Mammary epithelial cell (primary cell): ENCODE measurements at regions of chr22 and their contacts with region 1.

Region 1: DNA sequence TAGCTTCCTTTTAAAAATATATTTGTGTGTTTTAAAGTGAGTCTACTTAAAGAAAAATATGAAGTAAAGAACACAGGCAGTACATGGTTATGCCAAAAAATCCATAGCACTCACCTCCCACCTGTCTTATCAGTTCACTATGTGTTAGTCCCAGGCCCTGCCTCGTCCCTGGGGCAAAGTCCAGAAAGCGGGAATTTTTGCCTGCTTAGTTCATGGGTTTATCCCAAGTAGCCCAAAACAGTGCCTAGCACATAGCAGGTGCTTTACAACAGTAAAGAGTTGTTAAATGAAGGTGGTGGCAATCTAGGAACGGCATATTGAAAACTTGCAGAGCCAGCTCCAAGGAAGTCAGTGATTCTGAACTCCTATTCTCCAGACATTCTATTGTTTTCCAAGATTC is 154.0 kb downstream of the MN1 start:
- DNase-seq: no peak
- H3K4me3 ChIP-seq: no peak overlapping the region
- H3K27ac ChIP-seq: no peak overlapping the region
- H3K4me1 ChIP-seq: no peaks in the 10 kb centered on the region
- H3K27me3 ChIP-seq: no peaks in the 10 kb centered on the region
- CTCF ChIP-seq: no peak

Region 2: GRCh38 chr22:27699383-27700019 is 52.0 kb after region 1 on chr22:
- CTCF ChIA-PET with region 1: no interaction called
- dilution Hi-C with region 1: loop called (anchors 5 kb)
- in situ Hi-C with region 1: no loop called
- intact Hi-C with region 1: no loop called
- DNase-seq: no peak
- H3K4me3 ChIP-seq: no peak overlapping the region
- H3K27ac ChIP-seq: no peak overlapping the region
- H3K4me1 ChIP-seq: no peaks in the 10 kb centered on the region
- H3K27me3 ChIP-seq: no peaks in the 10 kb centered on the region
- CTCF ChIP-seq: no peak